Lower leg skin (tissue), 4 donors: ENCODE measurements at regions of chr11 and their contacts with region 1.

Region 1: GRCh38 chr11:43589606-43590250 is 90.8 kb upstream of the HSD17B12 start:
- DNase-seq: no peak
- H3K4me3 ChIP-seq: no peak overlapping the region
- CTCF ChIP-seq: no peak
- POLR2A ChIP-seq: no peak

Region 2: DNA sequence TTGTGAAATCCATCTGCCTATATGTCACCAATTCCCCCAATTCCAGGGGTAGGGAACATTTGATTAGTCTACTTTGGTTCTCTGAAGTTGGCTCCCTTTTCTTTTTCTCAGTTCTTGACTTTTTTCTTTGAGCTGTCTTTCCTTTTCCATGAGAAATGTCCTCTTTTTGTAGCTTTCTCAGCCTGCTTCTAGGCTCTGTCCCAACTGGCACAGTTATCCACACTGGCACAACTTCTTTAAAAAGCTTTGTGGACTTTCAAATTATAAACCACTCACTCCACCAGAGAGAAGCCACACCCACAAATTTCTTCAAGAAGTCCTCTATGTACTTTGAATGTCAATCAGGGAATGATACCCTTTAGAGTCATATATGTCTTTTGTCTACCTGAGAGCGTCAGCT is 130.5 kb before region 1 on chr11:
- intact Hi-C with region 1: no loop called
- DNase-seq: no peak
- H3K4me3 ChIP-seq: no peak overlapping the region
- CTCF ChIP-seq: no peak
- POLR2A ChIP-seq: no peak

Region 3: DNA sequence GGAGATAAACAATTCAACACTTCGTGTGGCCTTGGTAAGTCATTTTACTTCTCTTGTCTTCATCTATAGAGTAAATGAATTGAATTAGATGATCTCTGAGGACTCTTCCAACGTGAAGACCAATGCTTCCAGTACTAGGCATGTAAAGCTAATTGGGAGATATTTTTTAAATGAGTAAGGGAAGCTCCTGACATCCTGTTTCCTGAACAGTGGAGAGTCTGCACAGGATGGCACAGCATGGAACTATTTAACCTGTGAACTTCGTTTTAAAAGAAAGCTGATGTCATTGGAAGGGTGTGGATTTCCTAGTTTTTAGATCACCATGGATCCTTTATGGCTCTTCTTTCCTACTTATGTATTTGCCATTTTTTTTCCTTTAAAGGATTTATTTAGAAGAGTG is 42.4 kb after region 1 on chr11:
- intact Hi-C with region 1: no loop called
- DNase-seq: no peak
- H3K4me3 ChIP-seq: no peak overlapping the region
- CTCF ChIP-seq: no peak
- POLR2A ChIP-seq: no peak

Region 4: DNA sequence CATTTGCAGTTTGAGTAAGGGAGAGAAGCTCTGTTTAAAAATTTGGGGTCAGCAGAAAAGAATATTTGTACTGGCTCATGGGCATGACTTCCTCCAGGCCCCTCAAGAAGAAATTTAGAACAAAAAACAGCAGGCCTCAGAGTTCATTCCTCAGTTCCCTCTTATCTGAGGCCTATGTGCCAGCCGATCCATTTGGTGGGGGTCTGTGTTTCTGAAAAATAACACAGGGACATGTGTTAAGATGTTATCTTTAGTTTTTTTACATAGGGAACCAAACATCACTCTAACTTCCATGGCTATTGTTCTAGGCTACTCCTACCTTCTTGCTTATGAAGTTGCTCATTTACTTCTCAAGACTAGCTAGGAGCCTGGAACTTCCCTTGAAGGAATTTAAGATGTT is 74.6 kb after region 1 on chr11:
- intact Hi-C with region 1: no loop called
- DNase-seq: no peak
- H3K4me3 ChIP-seq: no peak overlapping the region
- CTCF ChIP-seq: no peak
- POLR2A ChIP-seq: no peak

Region 5: DNA sequence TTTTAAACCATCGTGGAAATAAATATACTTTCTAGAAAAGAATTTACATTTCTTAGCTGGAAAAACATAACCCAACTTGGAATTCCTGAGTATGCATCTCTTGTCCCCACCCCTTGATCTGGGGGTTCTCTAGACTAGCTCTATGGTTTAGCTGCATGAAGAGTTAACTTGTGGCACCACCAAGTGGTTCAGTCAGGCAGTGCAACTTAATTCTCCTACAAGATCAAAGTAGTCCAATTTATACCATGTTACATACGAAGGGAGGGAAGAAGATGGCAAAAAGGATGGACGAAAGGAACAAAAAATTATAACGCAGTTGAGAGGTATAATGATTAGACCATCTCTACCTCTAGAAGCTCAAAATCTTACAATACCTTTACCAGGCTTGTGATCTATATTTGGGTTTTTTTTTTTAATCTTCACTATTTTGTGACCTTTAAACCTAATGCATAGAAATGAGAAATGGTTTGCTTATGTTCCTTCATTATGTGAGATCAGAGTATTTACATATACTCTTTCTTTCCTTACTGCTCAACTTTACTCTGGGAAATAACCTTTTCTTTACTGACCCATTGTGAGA is 262.4 kb after region 1 on chr11:
- intact Hi-C with region 1: no loop called
- DNase-seq: peak in 1 of 2 donors; percentile 51
- H3K4me3 ChIP-seq: no peak overlapping the region
- CTCF ChIP-seq: peak in 1 of 3 donors; percentile 17
- POLR2A ChIP-seq: no peak

Region 6: DNA sequence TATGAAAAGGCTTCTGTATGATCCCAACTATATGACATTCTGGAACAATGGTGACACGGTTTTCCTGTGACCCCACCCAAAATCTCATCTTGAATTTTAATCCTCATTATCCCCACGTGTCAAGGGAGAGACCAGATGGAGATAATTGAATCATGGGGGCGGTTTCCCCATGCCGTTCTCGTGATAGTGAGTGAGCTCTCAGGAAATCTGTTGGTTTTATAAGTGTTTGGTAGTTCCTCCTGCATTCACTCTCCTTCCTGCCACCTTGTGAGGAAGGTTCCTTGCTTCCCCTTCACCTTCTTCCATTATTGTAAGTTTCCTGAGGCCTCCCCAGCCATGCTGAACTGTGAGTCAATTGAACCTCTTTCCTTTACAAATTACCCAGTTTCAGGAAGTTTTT is 1084.0 kb after region 1 on chr11:
- intact Hi-C with region 1: loop called (anchors 10 kb)
- DNase-seq: peak in 1 of 2 donors; percentile 21
- H3K4me3 ChIP-seq: no peak overlapping the region
- CTCF ChIP-seq: no peak
- POLR2A ChIP-seq: no peak